Sigmoid colon (tissue), 7 donors: ENCODE measurements at regions of chr1 and their contacts with region 1.

Region 1: GRCh38 chr1:109397538-109398342 is at the start of gene SORT1:
- DNase-seq: peak; percentile 95
- H3K4me3 ChIP-seq: peak within 1 kb of the TSS; percentile 34 to 89 (median 74)
- H3K27ac ChIP-seq: peak within 1 kb of the TSS; percentile 85 to 90 (median 87)
- H3K4me1 ChIP-seq: peaks cover 0 to 55% (median 47%) of the 10 kb centered on the region in 4 donors
- H3K27me3 ChIP-seq: no peaks in the 10 kb centered on the region
- CTCF ChIP-seq: no peak
- EP300 ChIP-seq: no peak
- POLR2A ChIP-seq: no peak
- total RNA-seq, gene SORT1: 33.4 to 55.1 (median 47.2) TPM

Region 2: DNA sequence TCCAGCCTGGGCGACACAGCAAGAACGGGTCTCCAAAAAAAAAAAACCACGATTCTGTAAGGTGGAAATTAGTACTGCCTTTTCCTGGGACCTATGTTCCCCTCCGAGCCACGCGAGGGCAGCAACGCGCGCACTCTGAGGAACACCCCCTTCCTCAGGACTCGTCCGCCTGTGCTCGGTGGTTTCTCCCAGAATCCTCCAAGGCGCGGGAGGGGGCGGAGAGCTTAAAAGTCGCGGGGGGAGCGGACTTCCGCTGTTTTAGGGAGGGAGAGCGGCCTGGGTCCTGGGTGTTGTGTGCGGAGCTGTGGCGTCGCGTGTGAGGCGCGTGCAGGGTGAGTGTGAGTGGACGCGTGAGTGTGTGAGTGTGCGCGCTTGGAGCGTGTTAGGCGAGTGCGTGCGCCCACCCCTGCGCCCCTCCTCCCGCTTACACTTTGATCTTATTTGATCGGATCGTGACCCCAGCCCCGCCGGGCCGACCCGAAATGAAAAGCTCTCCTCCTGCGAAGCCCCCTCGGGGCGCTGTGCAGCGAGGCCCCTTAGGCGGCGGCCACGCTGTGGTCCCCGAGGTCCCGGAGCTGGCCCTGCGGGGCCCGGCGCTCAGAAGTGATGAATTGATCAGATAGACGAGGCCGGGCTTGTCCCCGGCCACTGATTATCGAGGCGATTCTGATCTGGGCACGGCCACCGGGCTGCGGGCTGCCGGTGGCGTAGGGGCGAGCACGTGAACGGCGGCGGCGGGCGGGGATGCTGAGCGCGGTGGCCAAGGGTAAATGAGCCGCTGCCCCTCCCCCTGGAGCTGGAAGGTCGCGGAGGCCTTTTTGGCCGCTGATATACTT is 297.6 kb before region 1 on chr1:
- intact Hi-C with region 1: loop called (anchors 10 kb)
- DNase-seq: peak; percentile 99
- H3K4me3 ChIP-seq: peak overlapping the region; percentile 66 to 97 (median 87)
- H3K27ac ChIP-seq: peak overlapping the region; percentile 90 to 99 (median 95)
- H3K4me1 ChIP-seq: peaks cover 0 to 22% (median 15%) of the 10 kb centered on the region in 4 donors
- H3K27me3 ChIP-seq: no peaks in the 10 kb centered on the region
- CTCF ChIP-seq: peak; percentile 73 to 88 (median 78)
- EP300 ChIP-seq: peak in 1 of 4 donors; percentile 68
- POLR2A ChIP-seq: peak; percentile 97 to 98

Region 3: GRCh38 chr1:109263597-109264398 is 133.9 kb before region 1 on chr1:
- intact Hi-C with region 1: loop called (anchors 1 kb)
- DNase-seq: peak; percentile 88
- H3K4me3 ChIP-seq: no peak overlapping the region
- H3K27ac ChIP-seq: peak overlapping the region in 1 of 4 donors; percentile 20
- H3K4me1 ChIP-seq: peaks cover 0 to 9% (median 2%) of the 10 kb centered on the region in 4 donors
- H3K27me3 ChIP-seq: no peaks in the 10 kb centered on the region
- CTCF ChIP-seq: peak; percentile 97 to 100 (median 98)
- EP300 ChIP-seq: no peak
- POLR2A ChIP-seq: no peak

Region 4: DNA sequence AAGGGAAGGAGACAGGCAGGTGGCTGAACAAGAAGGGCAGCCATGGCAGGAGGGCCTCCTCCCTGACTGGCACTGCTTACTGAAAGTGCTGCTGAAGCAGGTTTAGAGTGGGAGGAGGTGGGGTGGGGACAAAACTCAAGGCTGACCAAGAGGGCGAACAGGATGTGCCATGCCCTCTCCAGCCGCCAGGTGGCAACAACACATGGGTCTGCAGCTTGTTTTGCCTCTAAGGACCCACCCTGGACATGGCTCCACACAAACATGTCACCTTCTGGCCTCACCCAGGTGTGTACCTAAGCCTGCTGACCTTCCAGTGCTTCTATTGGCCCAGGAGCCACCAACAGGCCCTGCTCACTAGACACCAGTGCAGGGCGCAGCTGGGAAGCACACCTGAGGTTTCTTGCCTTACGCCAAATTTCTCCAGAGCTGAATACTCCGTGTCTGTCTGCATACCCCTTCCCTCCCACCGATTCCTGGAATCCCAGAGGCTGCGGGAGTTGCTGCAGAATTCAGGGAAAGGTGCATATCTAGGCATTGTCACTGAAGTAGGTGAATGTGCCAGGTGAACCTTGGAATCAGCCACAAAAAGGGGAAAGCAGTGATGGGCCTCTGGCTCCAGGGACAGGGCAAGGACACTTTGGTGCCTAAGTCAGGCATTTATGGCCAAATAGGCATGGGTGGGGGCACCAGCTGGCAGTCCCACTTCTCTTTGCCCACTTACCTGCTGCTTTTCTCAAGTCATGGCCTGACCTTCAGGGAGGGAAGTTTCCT is 120.1 kb before region 1 on chr1:
- intact Hi-C with region 1: loop called (anchors 2 kb)
- DNase-seq: peak; percentile 84
- H3K4me3 ChIP-seq: no peak overlapping the region
- H3K27ac ChIP-seq: peak overlapping the region in 1 of 4 donors; percentile 40
- H3K4me1 ChIP-seq: peaks cover 0 to 28% (median 17%) of the 10 kb centered on the region in 4 donors
- H3K27me3 ChIP-seq: no peaks in the 10 kb centered on the region
- CTCF ChIP-seq: peak; percentile 77 to 93 (median 89)
- EP300 ChIP-seq: no peak
- POLR2A ChIP-seq: no peak

Region 5: GRCh38 chr1:109361649-109362048 is 36.1 kb before region 1 on chr1:
- intact Hi-C with region 1: loop called (anchors 2 kb)
- DNase-seq: no peak
- H3K4me3 ChIP-seq: no peak overlapping the region
- H3K27ac ChIP-seq: peak overlapping the region in 2 of 4 donors; percentile 45 to 53
- H3K4me1 ChIP-seq: peaks cover 0 to 49% (median 29%) of the 10 kb centered on the region in 4 donors
- H3K27me3 ChIP-seq: no peaks in the 10 kb centered on the region
- CTCF ChIP-seq: no peak
- EP300 ChIP-seq: peak in 1 of 4 donors; percentile 20
- POLR2A ChIP-seq: no peak

Region 6: GRCh38 chr1:110176299-110176956 is 778.7 kb after region 1 on chr1:
- intact Hi-C with region 1: no loop called
- DNase-seq: no peak
- H3K4me3 ChIP-seq: no peak overlapping the region
- H3K27ac ChIP-seq: no peak overlapping the region
- H3K4me1 ChIP-seq: peaks cover 0 to 4% (median 2%) of the 10 kb centered on the region in 4 donors
- H3K27me3 ChIP-seq: peaks cover 0 to 10% (median 0%) of the 10 kb centered on the region in 3 donors
- CTCF ChIP-seq: no peak
- EP300 ChIP-seq: no peak
- POLR2A ChIP-seq: no peak